ENCODE measurements at regions of chr1 and their contacts with region 1.

Region 1: DNA sequence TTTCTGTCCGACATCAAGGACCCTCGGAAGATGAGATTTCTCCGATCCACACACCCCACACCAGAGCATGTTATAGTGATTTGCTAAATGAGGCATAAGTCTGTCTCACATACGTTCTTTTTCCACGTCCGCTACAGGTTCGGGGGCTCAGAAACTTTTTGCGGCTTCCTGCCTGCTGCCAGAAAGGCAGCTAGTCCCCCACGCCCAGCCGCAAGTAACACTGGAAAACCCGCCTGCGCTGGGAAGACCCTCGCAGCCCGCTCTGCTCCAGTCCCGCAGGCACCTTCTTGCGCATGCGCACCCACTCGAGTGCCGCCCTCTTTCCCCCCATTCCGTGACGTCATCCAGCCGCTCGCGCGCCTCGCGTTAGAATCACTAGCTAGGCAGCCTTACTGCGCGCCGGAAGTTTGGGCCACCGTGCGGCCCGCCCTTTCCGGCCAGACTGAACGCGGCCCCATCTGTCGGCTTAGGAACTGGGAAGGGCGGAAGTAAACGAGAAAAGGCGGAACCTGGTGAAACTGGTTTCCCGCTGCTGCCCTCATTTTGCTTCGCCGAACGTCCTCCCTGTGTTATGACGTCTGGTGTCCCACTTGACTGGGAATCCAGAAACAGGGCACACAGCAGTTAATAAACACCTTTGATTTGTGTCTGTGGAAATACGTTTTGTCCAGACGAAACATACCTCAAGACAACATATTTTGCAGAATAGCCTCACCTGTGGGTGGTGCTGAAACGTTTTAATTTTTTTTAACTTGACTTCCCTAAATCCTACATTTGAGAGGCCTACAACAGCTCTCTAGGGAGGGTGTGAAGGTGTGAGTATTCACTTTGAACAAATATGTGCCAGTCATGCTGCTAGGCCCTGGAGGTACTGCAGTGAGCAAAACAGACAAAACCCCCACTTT is at the start of gene C1orf74:
- DNase-seq: peak; percentile 98 to 100 (median 99)
- ATAC-seq: peak; percentile 95
- H3K4me3 ChIP-seq: peak within 1 kb of the TSS; percentile 64 to 70
- H3K4me3 Mint-ChIP-seq: peak within 1 kb of the TSS; percentile 92
- H3K27ac ChIP-seq: peak within 1 kb of the TSS; percentile 85 to 95
- H3K27ac Mint-ChIP-seq: peak within 1 kb of the TSS; percentile 98
- H3K4me1 ChIP-seq: peaks cover 17% of the 10 kb centered on the region
- H3K4me1 Mint-ChIP-seq: peaks cover 32% of the 10 kb centered on the region
- H3K27me3 ChIP-seq: no peaks in the 10 kb centered on the region
- H3K27me3 Mint-ChIP-seq: no peaks in the 10 kb centered on the region
- CTCF ChIP-seq: no peak
- total RNA-seq, gene C1orf74: 0.71 to 0.75 TPM

Region 2: GRCh38 chr1:209728466-209728865 is 56.1 kb before region 1 on chr1:
- CTCF ChIA-PET with region 1: no interaction called
- POLR2A ChIA-PET with region 1: no interaction called
- intact Hi-C with region 1: no loop called
- DNase-seq: no peak
- ATAC-seq: no peak
- H3K4me3 ChIP-seq: no peak overlapping the region
- H3K4me3 Mint-ChIP-seq: no peak overlapping the region
- H3K27ac ChIP-seq: no peak overlapping the region
- H3K27ac Mint-ChIP-seq: no peak overlapping the region
- H3K4me1 ChIP-seq: peaks cover 20% of the 10 kb centered on the region
- H3K4me1 Mint-ChIP-seq: peaks cover 19% of the 10 kb centered on the region
- H3K27me3 ChIP-seq: no peaks in the 10 kb centered on the region
- H3K27me3 Mint-ChIP-seq: no peaks in the 10 kb centered on the region
- CTCF ChIP-seq: no peak

Region 3: GRCh38 chr1:209769171-209769904 is 15.2 kb before region 1 on chr1:
- CTCF ChIA-PET with region 1: interaction called, 13 read pairs
- POLR2A ChIA-PET with region 1: interaction called, 377 read pairs
- intact Hi-C with region 1: loop called (anchors 1 kb)
- DNase-seq: peak; percentile 33 to 87 (median 76)
- ATAC-seq: peak; percentile 72
- H3K4me3 ChIP-seq: peak overlapping the region; percentile 72 to 88
- H3K4me3 Mint-ChIP-seq: no peak overlapping the region
- H3K27ac ChIP-seq: peak overlapping the region; percentile 75 to 76
- H3K27ac Mint-ChIP-seq: no peak overlapping the region
- H3K4me1 ChIP-seq: peaks cover 68% of the 10 kb centered on the region
- H3K4me1 Mint-ChIP-seq: peaks cover 44% of the 10 kb centered on the region
- H3K27me3 ChIP-seq: no peaks in the 10 kb centered on the region
- H3K27me3 Mint-ChIP-seq: no peaks in the 10 kb centered on the region
- CTCF ChIP-seq: no peak

Region 4: GRCh38 chr1:209805875-209806760 is 21.6 kb after region 1 on chr1 and contains the start of gene IRF6:
- CTCF ChIA-PET with region 1: no interaction called
- POLR2A ChIA-PET with region 1: interaction called, 3 read pairs
- intact Hi-C with region 1: loop called in 1 of 2 experiments (anchors 1 kb)
- DNase-seq: peak; percentile 44 to 84 (median 72)
- ATAC-seq: peak; percentile 96
- H3K4me3 ChIP-seq: peak within 1 kb of the TSS; percentile 44 to 71
- H3K4me3 Mint-ChIP-seq: peak within 1 kb of the TSS; percentile 93
- H3K27ac ChIP-seq: peak within 1 kb of the TSS in 1 of 2 experiments; percentile 16
- H3K27ac Mint-ChIP-seq: peak within 1 kb of the TSS; percentile 86
- H3K4me1 ChIP-seq: peaks cover 12% of the 10 kb centered on the region
- H3K4me1 Mint-ChIP-seq: peaks cover 13% of the 10 kb centered on the region
- H3K27me3 ChIP-seq: no peaks in the 10 kb centered on the region
- H3K27me3 Mint-ChIP-seq: peaks cover 4% of the 10 kb centered on the region
- CTCF ChIP-seq: no peak
- total RNA-seq, gene IRF6: 2.5 to 3.4 TPM

Measured in CD8-positive, alpha-beta T cell (primary cell).